Activated naive CD4-positive, alpha-beta T cell treated with anti-CD3 and anti-CD28 coated beads for 36 hours (primary cell): ENCODE measurements at regions of chr17 and their contacts with region 1.

Region 1: GRCh38 chr17:74467221-74467951 is 952 bp downstream of the CD300A start:
- DNase-seq: no peak
- H3K4me3 Mint-ChIP-seq: no peak overlapping the region
- H3K27ac Mint-ChIP-seq: peak overlapping the region; percentile 7
- H3K4me1 Mint-ChIP-seq: peaks cover 25% of the 10 kb centered on the region
- H3K27me3 Mint-ChIP-seq: no peaks in the 10 kb centered on the region

Region 2: GRCh38 chr17:74513987-74514631 is 46.7 kb after region 1 on chr17:
- CTCF ChIA-PET with region 1: no interaction called
- intact Hi-C with region 1: loop called (anchors 2 kb)
- DNase-seq: peak; percentile 81
- H3K4me3 Mint-ChIP-seq: peak overlapping the region; percentile 51
- H3K27ac Mint-ChIP-seq: peak overlapping the region; percentile 83
- H3K4me1 Mint-ChIP-seq: peaks cover 20% of the 10 kb centered on the region
- H3K27me3 Mint-ChIP-seq: peaks cover 16% of the 10 kb centered on the region